CD8-positive, alpha-beta T cell (primary cell): ENCODE measurements at regions of chr2 and their contacts with region 1.

Region 1: GRCh38 chr2:221969087-221969829 is 329.5 kb downstream of the PAX3 start:
- DNase-seq: peak in 2 of 9 experiments; percentile 4 to 8
- ATAC-seq: no peak
- H3K4me3 ChIP-seq: no peak overlapping the region
- H3K4me3 Mint-ChIP-seq: no peak overlapping the region
- H3K27ac ChIP-seq: no peak overlapping the region
- H3K27ac Mint-ChIP-seq: no peak overlapping the region
- H3K4me1 ChIP-seq: no peaks in the 10 kb centered on the region
- H3K4me1 Mint-ChIP-seq: no peaks in the 10 kb centered on the region
- H3K27me3 ChIP-seq: no peaks in the 10 kb centered on the region
- H3K27me3 Mint-ChIP-seq: no peaks in the 10 kb centered on the region
- CTCF ChIP-seq: no peak

Region 2: DNA sequence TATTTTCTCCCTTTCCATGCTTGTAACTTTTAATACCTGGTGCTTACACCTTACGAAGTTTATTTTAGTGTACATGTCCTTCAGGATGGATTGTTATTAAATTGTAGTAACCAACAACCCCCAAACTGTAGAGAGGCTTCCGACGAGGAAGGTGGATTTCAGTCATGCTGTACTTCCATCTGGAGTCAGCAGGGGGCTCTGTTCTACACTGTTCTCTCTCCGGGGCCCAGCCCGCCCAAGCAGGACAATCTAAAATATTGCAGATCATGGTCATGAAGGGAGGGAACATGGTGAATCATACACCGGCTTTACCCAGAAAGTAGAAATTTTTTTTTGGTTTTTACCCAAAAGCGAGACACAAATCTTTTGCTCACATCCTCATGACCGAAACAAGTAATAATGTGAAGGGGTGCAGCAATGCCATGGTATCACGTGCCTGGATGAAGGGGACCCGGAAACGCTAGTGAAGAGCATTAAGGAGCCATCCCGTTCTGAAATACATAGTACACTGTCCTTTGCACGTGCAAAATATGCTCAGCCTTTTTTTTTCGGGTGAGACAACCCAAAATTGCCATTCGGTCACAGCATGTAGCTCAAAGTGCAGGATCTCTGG is 1281.9 kb before region 1 on chr2:
- CTCF ChIA-PET with region 1: no interaction called
- POLR2A ChIA-PET with region 1: no interaction called
- intact Hi-C with region 1: loop called in 1 of 2 experiments (anchors 5 kb)
- DNase-seq: peak; percentile 5 to 67 (median 50)
- ATAC-seq: peak; percentile 80
- H3K4me3 ChIP-seq: no peak overlapping the region
- H3K4me3 Mint-ChIP-seq: no peak overlapping the region
- H3K27ac ChIP-seq: no peak overlapping the region
- H3K27ac Mint-ChIP-seq: no peak overlapping the region
- H3K4me1 ChIP-seq: no peaks in the 10 kb centered on the region
- H3K4me1 Mint-ChIP-seq: no peaks in the 10 kb centered on the region
- H3K27me3 ChIP-seq: no peaks in the 10 kb centered on the region
- H3K27me3 Mint-ChIP-seq: peaks cover 8% of the 10 kb centered on the region
- CTCF ChIP-seq: peak; percentile 78